HEK293 (cell line): ENCODE measurements at regions of chr17 and their contacts with region 1.

Region 1: GRCh38 chr17:74379495-74380085 is 12.3 kb downstream of the GPR142 start:
- H3K4me3 ChIP-seq: no peak overlapping the region
- H3K27ac ChIP-seq: no peak overlapping the region
- H3K4me1 ChIP-seq: peaks cover 6% of the 10 kb centered on the region
- CTCF ChIP-seq: peak; percentile 83

Region 2: DNA sequence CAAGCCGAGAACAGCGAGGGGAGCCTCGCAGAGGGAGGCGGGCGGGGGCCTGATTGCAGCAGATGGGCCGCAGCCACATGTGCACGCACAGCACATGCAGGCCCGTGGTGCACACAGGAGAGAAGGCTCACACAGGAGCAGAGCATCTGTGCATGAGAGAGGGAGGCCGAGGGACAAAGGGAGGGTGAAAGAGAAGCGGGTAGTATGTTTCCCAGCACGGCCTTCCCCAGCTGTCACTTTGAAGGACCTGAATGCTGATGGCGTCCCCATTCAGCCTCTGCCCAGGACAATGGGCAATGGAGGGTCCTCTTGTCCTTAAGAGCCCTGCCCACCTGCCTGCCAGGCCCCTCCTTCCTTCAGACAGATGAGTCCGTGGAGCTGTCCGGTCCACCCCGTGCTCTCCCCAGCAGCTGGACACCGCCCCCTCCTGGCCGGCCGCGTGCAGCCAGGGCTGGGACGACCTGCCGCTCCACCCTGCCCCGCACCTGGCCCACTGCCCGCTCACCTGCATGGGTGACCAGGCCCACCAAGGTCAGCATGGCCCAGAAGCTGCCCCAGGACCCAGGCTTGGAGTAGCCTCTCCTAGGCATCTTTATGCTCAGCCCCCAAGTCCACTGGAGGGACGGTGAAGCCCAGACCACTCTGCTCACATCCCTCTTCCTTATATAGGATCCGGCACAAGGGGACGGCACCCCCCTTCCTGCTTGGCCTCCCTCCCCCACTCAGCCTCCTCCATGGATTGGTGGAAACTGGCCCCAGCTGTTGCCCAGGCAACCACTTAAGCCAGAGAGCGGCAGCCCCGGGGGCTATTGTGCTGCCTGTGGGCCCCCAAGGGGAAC is 18.1 kb before region 1 on chr17 and contains the start of gene BTBD17:
- CTCF ChIA-PET with region 1: interaction called, 20 read pairs
- POLR2A ChIA-PET with region 1: interaction called, 5 read pairs
- H3K4me3 ChIP-seq: no peak within 1 kb of the TSS
- H3K27ac ChIP-seq: no peak within 1 kb of the TSS
- H3K4me1 ChIP-seq: no peaks in the 10 kb centered on the region
- CTCF ChIP-seq: peak; percentile 79

Region 3: DNA sequence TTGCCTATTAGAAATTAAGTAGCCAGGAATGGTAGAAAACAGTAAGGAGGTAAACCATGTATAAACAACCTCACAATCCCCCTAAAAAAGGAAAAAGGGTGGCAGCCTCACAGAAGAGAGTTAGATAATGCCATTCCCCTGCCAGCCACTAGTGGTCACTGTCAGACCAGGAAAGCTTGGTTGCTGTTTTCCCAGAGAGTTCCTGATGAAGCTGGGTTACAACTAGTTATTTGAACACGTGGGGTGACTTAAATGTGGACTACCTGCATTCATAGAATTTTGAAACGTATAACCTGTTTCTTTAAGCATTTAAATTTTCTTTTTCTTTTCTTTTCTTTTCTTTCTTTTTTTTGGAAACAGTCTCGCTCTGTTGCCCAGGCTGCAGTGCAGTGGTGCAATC is 58.1 kb after region 1 on chr17:
- CTCF ChIA-PET with region 1: interaction called, 57 read pairs
- POLR2A ChIA-PET with region 1: no interaction called
- H3K4me3 ChIP-seq: no peak overlapping the region
- H3K27ac ChIP-seq: no peak overlapping the region
- H3K4me1 ChIP-seq: peaks cover 2% of the 10 kb centered on the region; the same call in 1 of the 2 replicates
- CTCF ChIP-seq: no peak

Region 4: DNA sequence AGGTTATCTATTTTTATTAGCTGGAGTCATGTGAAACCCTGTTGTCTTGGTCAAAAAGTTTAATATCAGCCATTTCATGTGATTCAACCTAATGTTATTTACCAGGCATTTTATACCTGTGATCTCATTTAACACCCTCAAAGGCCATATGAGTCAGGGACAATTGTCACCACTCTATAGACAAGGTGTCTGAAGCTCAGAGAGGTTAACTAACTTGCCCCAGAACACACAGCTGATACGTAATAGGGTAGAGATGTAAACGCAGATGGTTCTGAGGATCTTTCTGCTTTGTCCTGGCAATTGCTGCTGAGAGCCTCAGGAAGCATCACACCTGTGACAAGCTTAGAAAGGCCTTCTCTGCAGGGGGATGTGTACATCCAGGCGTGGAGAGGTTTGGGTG is 91.8 kb after region 1 on chr17:
- CTCF ChIA-PET with region 1: interaction called, 10 read pairs
- POLR2A ChIA-PET with region 1: no interaction called
- H3K4me3 ChIP-seq: no peak overlapping the region
- H3K27ac ChIP-seq: no peak overlapping the region
- H3K4me1 ChIP-seq: no peaks in the 10 kb centered on the region
- CTCF ChIP-seq: no peak

Region 5: GRCh38 chr17:74502861-74503260 is 123.3 kb after region 1 on chr17:
- CTCF ChIA-PET with region 1: interaction called, 12 read pairs
- POLR2A ChIA-PET with region 1: interaction called, 4 read pairs
- H3K4me3 ChIP-seq: no peak overlapping the region
- H3K27ac ChIP-seq: no peak overlapping the region
- H3K4me1 ChIP-seq: no peaks in the 10 kb centered on the region
- CTCF ChIP-seq: no peak

Region 6: DNA sequence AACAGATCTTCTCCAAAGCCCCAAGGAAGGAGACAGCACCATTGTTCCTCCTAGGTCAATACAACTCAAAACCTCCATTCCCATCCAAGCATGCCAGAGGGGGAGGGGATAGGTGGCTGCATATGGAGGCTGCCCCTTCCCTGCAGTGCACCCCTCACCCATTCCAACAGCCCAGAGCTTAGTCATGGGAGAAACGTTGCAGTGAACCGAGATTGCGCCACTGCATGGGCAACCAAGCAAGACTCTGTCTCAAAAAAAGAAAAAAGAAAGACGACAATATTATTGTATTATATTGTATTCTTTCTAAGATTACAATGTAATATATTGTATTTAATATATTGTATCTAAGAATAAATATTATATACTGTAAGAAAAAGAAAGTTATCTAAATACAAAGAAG is 280.3 kb after region 1 on chr17:
- CTCF ChIA-PET with region 1: no interaction called
- POLR2A ChIA-PET with region 1: no interaction called
- H3K4me3 ChIP-seq: no peak overlapping the region
- H3K27ac ChIP-seq: no peak overlapping the region
- H3K4me1 ChIP-seq: no peaks in the 10 kb centered on the region
- CTCF ChIP-seq: no peak

Region 7: GRCh38 chr17:75228305-75228704 is 848.7 kb after region 1 on chr17:
- CTCF ChIA-PET with region 1: no interaction called
- POLR2A ChIA-PET with region 1: no interaction called
- H3K4me3 ChIP-seq: no peak overlapping the region
- H3K27ac ChIP-seq: no peak overlapping the region
- H3K4me1 ChIP-seq: no peaks in the 10 kb centered on the region
- CTCF ChIP-seq: no peak